CD8-positive, alpha-beta T cell (primary cell): ENCODE measurements at regions of chr17 and their contacts with region 1.

Region 1: GRCh38 chr17:79393358-79394202 is 217.3 kb downstream of the RBFOX3 start:
- DNase-seq: peak; percentile 45 to 76 (median 68)
- ATAC-seq: peak; percentile 79
- H3K4me3 ChIP-seq: no peak overlapping the region
- H3K4me3 Mint-ChIP-seq: no peak overlapping the region
- H3K27ac ChIP-seq: no peak overlapping the region
- H3K27ac Mint-ChIP-seq: no peak overlapping the region
- H3K4me1 ChIP-seq: peaks cover 3% of the 10 kb centered on the region
- H3K4me1 Mint-ChIP-seq: peaks cover 10% of the 10 kb centered on the region
- H3K27me3 ChIP-seq: peaks cover 3 to 15% of the 10 kb centered on the region in 2 experiments
- H3K27me3 Mint-ChIP-seq: peaks cover 56% of the 10 kb centered on the region
- CTCF ChIP-seq: peak; percentile 77

Region 2: DNA sequence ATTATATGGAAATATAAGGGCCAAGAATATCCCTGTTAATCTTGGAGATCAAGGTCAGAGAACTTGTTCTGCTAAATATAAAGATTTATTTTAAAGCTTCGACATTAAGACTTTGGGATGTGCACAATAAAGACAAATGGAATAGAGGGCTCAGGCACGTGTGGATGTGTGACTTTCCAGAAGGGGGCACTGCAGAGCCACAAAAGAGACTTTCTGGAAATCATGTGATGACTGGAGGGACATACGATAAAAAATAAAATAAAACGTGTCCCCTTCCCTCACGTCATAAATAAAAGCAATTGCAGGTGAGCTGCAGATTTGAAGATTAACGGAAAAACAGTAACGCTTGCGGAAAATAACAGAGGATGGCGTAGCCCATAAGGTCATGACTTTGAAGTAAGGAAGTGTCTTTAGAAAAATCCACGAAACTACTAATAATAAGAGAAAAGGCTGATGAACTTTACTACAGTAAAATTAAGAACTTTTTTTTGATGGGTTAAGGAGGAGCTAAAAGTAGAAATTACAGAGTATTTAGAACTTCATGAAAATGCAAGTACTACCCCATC is 328.4 kb before region 1 on chr17:
- CTCF ChIA-PET with region 1: interaction called, 34 read pairs
- POLR2A ChIA-PET with region 1: no interaction called
- intact Hi-C with region 1: loop called in 1 of 2 experiments (anchors 1 kb)
- DNase-seq: peak; percentile 22 to 71 (median 57)
- ATAC-seq: peak; percentile 73
- H3K4me3 ChIP-seq: no peak overlapping the region
- H3K4me3 Mint-ChIP-seq: no peak overlapping the region
- H3K27ac ChIP-seq: no peak overlapping the region
- H3K27ac Mint-ChIP-seq: no peak overlapping the region
- H3K4me1 ChIP-seq: peaks cover 3% of the 10 kb centered on the region
- H3K4me1 Mint-ChIP-seq: peaks cover 3% of the 10 kb centered on the region
- H3K27me3 ChIP-seq: no peaks in the 10 kb centered on the region
- H3K27me3 Mint-ChIP-seq: no peaks in the 10 kb centered on the region
- CTCF ChIP-seq: peak; percentile 72

Region 3: DNA sequence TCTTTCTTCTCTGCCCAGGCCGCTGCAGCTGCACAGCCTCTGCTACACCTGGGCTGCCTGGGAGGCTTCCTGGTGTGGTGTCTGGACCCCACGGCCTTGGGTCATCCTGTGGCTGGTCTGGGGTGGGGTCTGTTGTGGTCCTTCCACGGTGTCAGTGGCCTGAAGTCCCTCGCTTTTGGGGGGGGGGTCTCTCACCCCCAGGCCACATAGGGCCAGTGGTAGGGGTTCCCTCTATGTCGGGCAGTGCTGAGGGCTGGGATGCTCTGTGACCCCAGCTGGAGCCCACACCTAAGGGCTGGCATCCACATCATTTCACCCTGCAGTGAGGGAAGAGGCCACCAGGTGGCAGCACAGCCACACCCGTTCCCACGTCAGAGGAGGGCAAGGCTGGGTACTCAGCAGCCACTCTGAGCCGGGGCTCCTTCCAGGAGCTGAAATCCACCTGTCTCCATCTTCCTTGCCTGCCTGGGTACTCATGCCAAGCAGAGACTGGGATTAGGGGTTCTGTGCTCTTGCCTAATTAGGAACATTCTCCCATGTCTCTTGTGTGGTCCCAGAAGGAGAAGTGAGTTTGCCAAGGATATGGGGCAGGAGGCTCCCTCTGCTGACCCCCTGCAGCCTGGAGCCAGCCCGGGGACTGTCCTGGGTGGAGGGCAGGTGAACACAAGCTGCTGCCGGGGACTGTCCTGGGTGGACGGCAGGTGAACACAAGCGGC is 306.0 kb before region 1 on chr17:
- CTCF ChIA-PET with region 1: interaction called, 33 read pairs
- POLR2A ChIA-PET with region 1: no interaction called
- intact Hi-C with region 1: loop called in 1 of 2 experiments (anchors 1 kb)
- DNase-seq: peak; percentile 59 to 77 (median 68)
- ATAC-seq: peak; percentile 95
- H3K4me3 ChIP-seq: no peak overlapping the region
- H3K4me3 Mint-ChIP-seq: no peak overlapping the region
- H3K27ac ChIP-seq: no peak overlapping the region
- H3K27ac Mint-ChIP-seq: no peak overlapping the region
- H3K4me1 ChIP-seq: no peaks in the 10 kb centered on the region
- H3K4me1 Mint-ChIP-seq: no peaks in the 10 kb centered on the region
- H3K27me3 ChIP-seq: no peaks in the 10 kb centered on the region
- H3K27me3 Mint-ChIP-seq: peaks cover 4% of the 10 kb centered on the region
- CTCF ChIP-seq: peak; percentile 86

Region 4: DNA sequence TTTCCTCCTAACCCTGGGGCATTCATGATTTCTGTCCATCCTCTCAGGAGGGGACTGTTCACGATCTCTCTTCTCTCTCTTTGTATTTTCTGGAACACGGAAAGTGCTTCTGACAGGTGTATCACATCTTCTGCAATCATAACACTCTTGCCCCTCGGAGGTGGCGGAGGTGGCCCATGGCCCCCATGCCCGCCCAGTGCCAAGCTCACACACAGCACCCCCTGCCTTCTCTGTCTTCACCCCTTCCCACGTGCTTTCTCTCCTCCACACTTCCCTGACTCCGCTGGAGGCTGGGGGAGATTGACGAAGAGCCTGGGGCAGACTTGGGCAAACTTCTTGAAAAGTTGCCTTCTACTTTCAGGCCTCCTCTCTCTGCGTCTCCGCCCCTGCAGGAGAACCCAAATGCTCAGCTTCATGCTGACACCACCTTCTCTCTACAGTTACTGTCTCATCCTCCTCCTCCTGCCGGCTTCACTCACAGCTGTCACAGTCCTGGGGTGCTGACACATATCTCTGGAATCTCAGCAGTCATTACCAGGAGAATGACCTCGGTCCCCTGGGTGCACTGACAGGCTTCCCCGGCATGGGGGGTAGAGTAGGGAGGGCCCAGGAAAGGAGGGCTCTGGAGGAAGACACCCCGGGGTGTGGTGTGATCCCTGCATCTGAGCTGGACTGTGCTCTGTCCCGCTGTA is 191.9 kb before region 1 on chr17:
- CTCF ChIA-PET with region 1: no interaction called
- POLR2A ChIA-PET with region 1: no interaction called
- intact Hi-C with region 1: no loop called
- DNase-seq: no peak
- ATAC-seq: no peak
- H3K4me3 ChIP-seq: no peak overlapping the region
- H3K4me3 Mint-ChIP-seq: no peak overlapping the region
- H3K27ac ChIP-seq: no peak overlapping the region
- H3K27ac Mint-ChIP-seq: no peak overlapping the region
- H3K4me1 ChIP-seq: no peaks in the 10 kb centered on the region
- H3K4me1 Mint-ChIP-seq: no peaks in the 10 kb centered on the region
- H3K27me3 ChIP-seq: no peaks in the 10 kb centered on the region
- H3K27me3 Mint-ChIP-seq: peaks cover 29% of the 10 kb centered on the region
- CTCF ChIP-seq: no peak

Region 5: DNA sequence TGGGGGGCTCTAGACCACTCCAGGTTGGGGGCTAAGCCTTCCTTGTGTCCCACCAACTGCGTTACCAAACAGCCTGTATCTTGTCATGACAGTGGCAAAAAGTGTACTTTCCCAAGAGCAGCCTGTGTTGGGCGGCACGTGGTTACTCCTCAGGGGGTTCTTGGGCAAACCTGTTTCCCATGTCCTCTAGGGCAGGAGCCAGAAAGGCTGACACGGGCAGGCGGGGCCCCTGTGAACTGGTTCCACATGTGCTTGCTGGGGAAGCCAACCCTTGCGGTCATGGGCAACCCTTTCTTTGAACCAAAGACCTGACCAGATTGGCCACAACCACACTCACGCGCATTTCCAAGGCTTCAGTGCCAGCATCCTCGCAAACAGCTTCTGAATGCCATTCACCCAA is 11.3 kb before region 1 on chr17:
- CTCF ChIA-PET with region 1: interaction called, 10 read pairs
- POLR2A ChIA-PET with region 1: no interaction called
- intact Hi-C with region 1: no loop called
- DNase-seq: no peak
- ATAC-seq: no peak
- H3K4me3 ChIP-seq: no peak overlapping the region
- H3K4me3 Mint-ChIP-seq: no peak overlapping the region
- H3K27ac ChIP-seq: no peak overlapping the region
- H3K27ac Mint-ChIP-seq: no peak overlapping the region
- H3K4me1 ChIP-seq: no peaks in the 10 kb centered on the region
- H3K4me1 Mint-ChIP-seq: no peaks in the 10 kb centered on the region
- H3K27me3 ChIP-seq: no peaks in the 10 kb centered on the region
- H3K27me3 Mint-ChIP-seq: peaks cover 15% of the 10 kb centered on the region
- CTCF ChIP-seq: no peak